ENCODE measurements at regions of chr1 and their contacts with region 1.

Region 1: GRCh38 chr1:46247436-46248121 is at the start of gene RAD54L:
- DNase-seq: peak; percentile 98
- total RNA-seq, gene RAD54L: 0.97 TPM

Region 2: DNA sequence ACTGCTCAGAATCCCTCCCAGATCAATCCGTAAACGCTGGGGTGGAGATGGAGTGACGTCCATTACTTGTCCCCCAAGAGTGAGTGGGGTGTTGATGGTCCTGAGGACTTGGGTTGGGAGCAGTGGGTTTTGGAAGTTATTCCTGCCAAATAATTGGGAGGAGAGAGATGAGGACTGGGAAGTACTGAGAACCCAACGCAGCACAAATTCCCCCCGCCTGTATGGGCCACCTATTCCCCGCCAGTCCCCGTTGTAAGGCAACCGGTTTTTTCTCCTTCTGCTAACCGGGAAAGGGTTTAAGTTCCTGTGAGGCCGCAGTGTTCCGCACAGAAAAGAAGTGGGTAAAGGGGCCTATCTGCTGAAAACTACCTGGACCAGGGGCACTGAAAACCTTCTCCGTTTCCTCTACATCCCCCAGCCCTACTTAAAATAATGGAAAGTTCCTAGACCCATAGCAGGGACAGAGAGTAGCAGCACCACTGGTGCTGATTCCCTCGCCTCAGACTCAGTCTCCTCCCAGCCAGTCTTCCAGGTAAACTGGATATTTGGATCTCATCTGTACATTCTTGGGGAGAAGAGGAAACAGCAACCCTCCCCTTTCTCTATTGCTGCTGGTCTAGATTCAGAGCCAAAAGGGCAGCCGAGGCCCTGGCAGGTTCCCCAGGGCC is 43.7 kb before region 1 on chr1:
- intact Hi-C with region 1: loop called (anchors 2 kb)
- DNase-seq: no peak

Region 3: DNA sequence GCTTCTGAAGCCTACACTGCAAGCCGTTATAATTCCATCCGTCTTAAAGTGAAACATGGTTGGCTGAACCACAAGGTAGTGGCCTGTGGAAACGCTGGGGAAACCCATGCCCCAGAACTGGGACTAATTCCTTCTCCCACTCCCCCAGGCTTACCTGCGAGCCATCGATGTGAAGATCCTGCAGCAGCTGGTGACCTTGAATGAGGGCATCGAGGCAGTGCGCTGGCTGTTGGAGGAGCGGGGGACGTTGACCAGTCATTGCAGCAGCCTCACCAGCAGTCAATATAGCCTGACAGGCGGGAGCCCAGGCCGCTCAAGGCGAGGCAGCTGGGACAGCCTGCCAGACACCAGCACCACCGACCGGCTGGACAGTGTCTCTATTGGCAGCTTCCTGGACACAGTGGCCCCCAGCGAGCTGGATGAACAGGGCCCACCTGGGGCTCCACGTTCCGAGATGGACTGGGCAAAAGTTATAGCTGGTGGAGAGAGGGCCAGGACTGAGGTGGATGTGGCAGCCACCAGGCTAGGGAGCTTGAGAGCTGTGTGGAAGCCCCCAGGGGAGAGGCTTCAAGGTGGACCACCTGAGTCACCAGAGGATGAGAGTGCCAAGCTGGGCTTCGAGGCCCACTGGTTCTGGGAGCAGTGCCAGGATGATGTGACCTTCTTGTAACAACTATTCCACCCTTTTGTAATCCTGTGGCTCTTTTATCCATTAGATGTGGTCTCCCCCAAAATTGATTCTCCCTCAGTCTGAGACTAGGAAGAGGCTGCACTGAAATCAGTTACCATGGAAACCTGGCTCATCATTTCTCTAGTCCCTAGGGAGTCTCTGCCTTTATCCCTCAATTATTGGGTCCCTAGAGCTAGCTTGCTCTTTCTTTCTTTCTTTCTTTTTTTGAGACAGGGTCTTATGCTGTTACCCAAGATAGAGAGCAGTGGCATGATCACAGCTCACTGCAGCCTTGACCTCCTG is 27.7 kb before region 1 on chr1:
- intact Hi-C with region 1: no loop called
- DNase-seq: no peak

Region 4: DNA sequence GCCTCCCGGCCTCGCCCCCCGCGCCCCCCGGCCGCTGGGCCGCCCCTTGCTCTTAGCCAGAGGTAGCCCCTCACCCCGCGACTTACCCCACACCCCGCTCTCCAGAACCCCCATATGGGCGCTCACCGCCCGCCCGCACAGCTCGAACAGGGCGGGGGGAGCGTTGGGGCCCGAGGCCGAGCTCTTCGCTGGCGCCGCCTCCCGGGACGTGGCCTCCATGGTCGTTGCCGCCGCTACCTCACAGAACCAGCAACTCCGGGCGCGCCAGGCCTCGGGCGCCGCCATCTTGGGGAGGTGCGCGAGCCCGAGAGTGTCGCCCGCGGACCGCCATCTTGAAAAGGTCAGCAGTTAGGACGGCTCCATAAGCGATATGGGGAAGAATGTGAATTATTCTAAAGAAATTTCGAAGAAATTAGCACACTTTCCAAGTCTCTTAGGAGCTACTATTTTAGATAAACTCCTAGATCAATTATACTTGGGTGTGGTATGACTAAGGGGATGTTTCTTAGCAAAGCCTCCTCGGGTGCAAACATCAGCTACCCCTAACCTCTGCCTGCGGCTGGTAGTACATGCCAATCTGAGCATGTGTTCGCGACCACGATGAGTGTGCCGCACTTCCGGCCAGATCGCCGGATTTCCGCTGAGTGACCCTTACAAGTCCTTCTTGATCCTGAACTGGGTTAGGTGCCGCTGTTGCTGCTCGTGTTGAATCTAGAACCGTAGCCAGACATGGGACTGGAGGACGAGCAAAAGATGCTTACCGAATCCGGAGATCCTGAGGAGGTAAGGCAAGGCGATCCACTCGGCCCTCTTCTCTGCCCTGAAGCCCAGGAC is 55.7 kb after region 1 on chr1 and contains the starts of genes LRRC41 and UQCRH:
- intact Hi-C with region 1: loop called (anchors 2 kb)
- DNase-seq: peak; percentile 96
- total RNA-seq, gene LRRC41: 52.5 TPM
- total RNA-seq, gene UQCRH: 907 TPM

Region 5: GRCh38 chr1:46340404-46341221 is 93.0 kb after region 1 on chr1 and contains the start of gene NSUN4:
- intact Hi-C with region 1: loop called (anchors 5 kb)
- DNase-seq: peak; percentile 95
- total RNA-seq, gene NSUN4: 18.5 TPM

Region 6: DNA sequence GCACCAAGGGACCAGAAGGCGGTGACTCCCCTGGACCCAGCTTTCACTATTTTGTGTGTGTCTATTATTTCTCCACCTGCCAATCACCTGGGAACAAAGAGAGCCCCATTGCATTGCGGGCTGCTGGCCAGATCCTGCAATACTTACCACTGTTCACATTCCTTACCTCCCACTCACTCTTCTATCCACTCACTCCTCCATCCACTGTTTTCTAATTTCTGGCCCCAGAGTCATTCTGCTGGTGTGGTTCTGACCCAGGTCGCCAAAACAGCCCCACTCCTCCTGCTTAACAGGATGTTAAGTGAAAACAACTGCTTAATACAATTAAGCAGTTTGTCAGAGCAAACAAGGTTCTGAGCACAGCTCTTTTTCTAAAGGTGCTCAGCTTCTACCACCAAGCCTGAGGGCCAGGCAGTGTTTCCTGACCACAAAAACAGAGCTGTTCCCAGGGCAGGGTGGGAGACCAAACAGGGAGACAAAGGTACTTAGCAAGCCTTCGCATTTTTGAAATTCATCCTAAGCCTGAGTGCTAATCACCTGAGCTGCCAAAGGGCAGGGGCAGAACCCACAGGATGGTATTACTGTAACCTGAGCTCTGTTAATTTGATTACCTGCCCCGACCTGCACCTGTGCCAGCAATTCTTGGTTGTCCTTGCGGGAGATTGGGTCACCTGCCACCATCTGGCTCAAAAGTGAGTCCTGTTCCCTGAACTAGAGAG is 509.8 kb after region 1 on chr1:
- intact Hi-C with region 1: no loop called
- DNase-seq: no peak

Measured in cardiac septum (tissue), 1 donor.